Natural killer cell (primary cell): ENCODE measurements at regions of chr11 and their contacts with region 1.

Region 1: GRCh38 chr11:18012863-18013781 is at the start of gene SERGEF:
- DNase-seq: peak; percentile 82 to 95
- ATAC-seq: peak; percentile 82 to 94 (median 85)
- H3K4me3 ChIP-seq: peak within 1 kb of the TSS; percentile 78
- H3K4me3 Mint-ChIP-seq: peak within 1 kb of the TSS; percentile 100
- H3K27ac ChIP-seq: peak within 1 kb of the TSS; percentile 84
- H3K27ac Mint-ChIP-seq: peak within 1 kb of the TSS; percentile 96 to 97
- H3K4me1 ChIP-seq: peaks cover 18% of the 10 kb centered on the region
- H3K4me1 Mint-ChIP-seq: peaks cover 36 to 43% of the 10 kb centered on the region in 2 donors
- H3K27me3 ChIP-seq: no peaks in the 10 kb centered on the region
- H3K27me3 Mint-ChIP-seq: no peaks in the 10 kb centered on the region
- CTCF ChIP-seq: no peak
- total RNA-seq, gene SERGEF: 67.5 to 78.6 (median 69.4) TPM

Region 2: DNA sequence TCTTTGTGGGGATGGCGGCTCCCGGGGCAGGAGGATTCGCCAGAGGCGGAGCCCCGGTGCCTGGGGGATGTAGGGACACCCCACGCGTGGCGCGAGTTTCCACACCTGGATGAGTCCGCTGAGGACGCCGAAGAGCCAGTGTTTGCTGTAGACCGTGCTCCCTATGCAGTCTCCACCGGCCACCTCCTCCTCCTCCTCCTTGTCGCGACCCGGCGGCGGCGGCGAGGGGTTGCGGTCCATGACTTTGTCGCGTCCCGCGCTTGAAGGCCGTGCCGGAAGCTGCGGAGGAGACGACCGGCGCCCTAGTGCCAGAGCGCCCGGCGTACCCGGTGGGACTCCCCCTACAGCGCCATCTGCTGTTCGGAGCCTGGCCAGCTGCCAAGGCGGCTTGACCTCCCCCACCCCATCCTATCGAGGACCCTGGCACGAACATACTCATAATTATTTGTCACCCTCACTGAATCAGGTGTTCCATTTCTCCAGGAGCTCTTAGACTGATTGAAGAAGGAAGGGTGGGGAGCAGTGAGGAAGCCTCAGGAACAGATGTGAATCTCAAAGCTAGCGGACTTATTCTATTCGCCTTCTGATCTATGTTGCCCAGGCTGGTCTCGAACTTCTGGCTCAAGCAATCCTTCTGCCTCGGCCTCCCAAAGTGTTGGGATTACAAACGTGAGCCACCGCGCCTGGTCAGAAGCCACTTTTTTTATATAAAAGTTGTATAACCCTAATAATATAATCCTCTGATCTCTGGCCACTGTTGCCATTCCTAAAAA is 92.9 kb after region 1 on chr11 and contains the start of gene SAAL1:
- intact Hi-C with region 1: loop called (anchors 5 kb)
- DNase-seq: peak; percentile 86 to 94
- ATAC-seq: peak; percentile 99
- H3K4me3 ChIP-seq: peak within 1 kb of the TSS; percentile 93
- H3K4me3 Mint-ChIP-seq: peak within 1 kb of the TSS; percentile 97
- H3K27ac ChIP-seq: peak within 1 kb of the TSS; percentile 62
- H3K27ac Mint-ChIP-seq: peak within 1 kb of the TSS; percentile 81 to 92
- H3K4me1 ChIP-seq: peaks cover 11% of the 10 kb centered on the region
- H3K4me1 Mint-ChIP-seq: peaks cover 25 to 31% of the 10 kb centered on the region in 2 donors
- H3K27me3 ChIP-seq: no peaks in the 10 kb centered on the region
- H3K27me3 Mint-ChIP-seq: peaks cover 4 to 9% of the 10 kb centered on the region in 2 donors
- CTCF ChIP-seq: peak; percentile 89
- total RNA-seq, gene SAAL1: 27.8 to 32.7 (median 29.5) TPM

Region 3: DNA sequence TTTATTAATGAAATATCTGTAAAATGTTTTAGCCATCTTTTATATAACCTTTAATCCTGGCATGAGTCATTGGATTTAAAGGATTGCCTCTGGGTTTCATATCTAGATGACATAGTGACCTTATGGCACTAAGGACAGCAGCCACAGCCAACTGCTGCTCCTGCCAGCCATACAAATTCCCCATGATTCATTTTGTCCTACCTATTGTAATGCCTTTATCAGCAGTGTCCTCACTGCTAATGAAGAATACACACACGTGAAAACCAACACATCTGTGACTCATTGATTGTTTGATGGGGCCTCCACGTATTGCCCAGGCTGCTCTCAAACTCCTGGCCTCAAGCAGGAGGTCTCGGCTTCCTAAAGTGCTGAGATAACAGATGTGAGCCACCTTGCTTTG is 444.3 kb after region 1 on chr11:
- intact Hi-C with region 1: no loop called
- DNase-seq: no peak
- ATAC-seq: no peak
- H3K4me3 ChIP-seq: no peak overlapping the region
- H3K4me3 Mint-ChIP-seq: no peak overlapping the region
- H3K27ac ChIP-seq: no peak overlapping the region
- H3K27ac Mint-ChIP-seq: no peak overlapping the region
- H3K4me1 ChIP-seq: no peaks in the 10 kb centered on the region
- H3K4me1 Mint-ChIP-seq: peaks cover 0 to 6% of the 10 kb centered on the region in 2 donors
- H3K27me3 ChIP-seq: no peaks in the 10 kb centered on the region
- H3K27me3 Mint-ChIP-seq: no peaks in the 10 kb centered on the region
- CTCF ChIP-seq: no peak

Region 4: GRCh38 chr11:18567081-18567480 is 554.0 kb after region 1 on chr11:
- intact Hi-C with region 1: no loop called
- DNase-seq: no peak
- ATAC-seq: no peak
- H3K4me3 ChIP-seq: no peak overlapping the region
- H3K4me3 Mint-ChIP-seq: no peak overlapping the region
- H3K27ac ChIP-seq: no peak overlapping the region
- H3K27ac Mint-ChIP-seq: peak overlapping the region in 1 of 2 donors; percentile 38
- H3K4me1 ChIP-seq: no peaks in the 10 kb centered on the region
- H3K4me1 Mint-ChIP-seq: peaks cover 0 to 5% of the 10 kb centered on the region in 2 donors
- H3K27me3 ChIP-seq: no peaks in the 10 kb centered on the region
- H3K27me3 Mint-ChIP-seq: no peaks in the 10 kb centered on the region
- CTCF ChIP-seq: no peak

Region 5: DNA sequence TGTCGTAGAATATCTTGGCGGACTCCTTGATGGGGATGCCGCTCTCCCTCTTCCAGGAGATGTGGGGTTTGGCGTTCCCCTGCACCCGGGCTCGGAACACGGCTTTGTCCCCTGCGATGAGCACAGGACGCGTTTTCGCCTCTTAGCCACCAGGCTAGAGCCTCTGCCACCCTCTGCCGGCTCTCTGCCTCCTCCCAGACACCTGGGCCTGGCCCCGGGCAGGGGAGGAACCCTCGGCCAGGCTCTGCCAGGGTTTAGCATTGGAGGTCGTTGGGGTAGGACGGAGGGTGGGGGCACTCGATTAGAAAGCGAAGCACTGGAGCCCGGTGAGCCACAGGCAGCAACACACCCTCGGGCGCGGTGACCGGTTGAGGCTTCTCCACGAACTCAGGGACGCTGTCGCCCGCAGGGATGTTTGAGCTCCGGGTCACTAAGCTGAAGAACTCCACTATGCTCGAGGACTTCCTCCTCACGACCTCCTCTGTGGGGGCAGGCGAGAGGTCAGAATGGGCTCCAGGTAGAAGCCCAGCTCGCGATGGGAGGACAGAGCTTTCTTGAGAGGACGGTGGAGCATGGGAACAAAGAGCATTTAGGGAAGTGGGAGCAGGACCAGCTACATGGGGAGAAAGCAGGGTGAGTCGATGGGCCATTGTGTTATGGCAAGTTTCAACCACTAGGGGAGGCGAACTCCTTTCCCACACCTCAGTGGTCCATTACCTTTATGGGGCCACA is 708.6 kb after region 1 on chr11:
- intact Hi-C with region 1: loop called (anchors 5 kb)
- DNase-seq: peak; percentile 35 to 77
- ATAC-seq: peak; percentile 60 to 75 (median 64)
- H3K4me3 ChIP-seq: peak overlapping the region; percentile 77
- H3K4me3 Mint-ChIP-seq: peak overlapping the region; percentile 95
- H3K27ac ChIP-seq: peak overlapping the region; percentile 16
- H3K27ac Mint-ChIP-seq: peak overlapping the region in 1 of 2 donors; percentile 84
- H3K4me1 ChIP-seq: peaks cover 18% of the 10 kb centered on the region
- H3K4me1 Mint-ChIP-seq: peaks cover 5 to 23% of the 10 kb centered on the region in 2 donors
- H3K27me3 ChIP-seq: no peaks in the 10 kb centered on the region
- H3K27me3 Mint-ChIP-seq: peaks cover 3 to 7% of the 10 kb centered on the region in 2 donors
- CTCF ChIP-seq: peak; percentile 72